Dendritic cell treated with granulocyte-macrophage colony-stimulating factor and Interleukin-4, amounts not matched to agents 40 ng/mL and 50 ng/mL, for 4 days (primary cell): ENCODE measurements at regions of chr2 and their contacts with region 1.

Region 1: DNA sequence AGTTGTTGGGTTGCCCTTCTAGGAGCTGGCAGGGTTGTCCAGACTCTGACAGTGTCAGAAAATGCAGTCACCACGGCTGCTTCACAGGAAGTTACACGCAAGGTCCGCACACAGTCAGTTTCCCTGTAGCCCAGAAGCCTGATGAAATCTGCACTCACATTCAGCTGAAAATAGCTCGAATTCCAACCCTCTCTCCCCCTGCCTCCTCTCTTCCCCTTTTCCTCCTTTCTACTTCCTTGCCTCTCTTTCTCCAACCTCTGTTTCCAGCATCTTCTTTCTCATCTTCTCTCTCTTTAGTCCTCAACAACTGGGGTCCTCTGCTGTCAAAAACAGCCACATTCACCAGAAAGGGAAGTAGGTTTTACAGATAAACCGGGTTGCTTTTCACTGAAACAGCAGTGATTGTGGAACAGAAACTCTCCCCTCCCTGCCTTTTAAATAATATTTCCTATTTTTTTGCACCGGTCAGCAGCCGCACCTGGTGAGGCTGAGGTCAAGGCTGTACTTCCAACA is 69.3 kb downstream of the BCL11A start:
- H3K4me3 Mint-ChIP-seq: peak overlapping the region; percentile 69
- H3K27ac Mint-ChIP-seq: peak overlapping the region; percentile 89
- H3K4me1 Mint-ChIP-seq: peaks cover 75% of the 10 kb centered on the region
- H3K27me3 Mint-ChIP-seq: no peaks in the 10 kb centered on the region

Region 2: DNA sequence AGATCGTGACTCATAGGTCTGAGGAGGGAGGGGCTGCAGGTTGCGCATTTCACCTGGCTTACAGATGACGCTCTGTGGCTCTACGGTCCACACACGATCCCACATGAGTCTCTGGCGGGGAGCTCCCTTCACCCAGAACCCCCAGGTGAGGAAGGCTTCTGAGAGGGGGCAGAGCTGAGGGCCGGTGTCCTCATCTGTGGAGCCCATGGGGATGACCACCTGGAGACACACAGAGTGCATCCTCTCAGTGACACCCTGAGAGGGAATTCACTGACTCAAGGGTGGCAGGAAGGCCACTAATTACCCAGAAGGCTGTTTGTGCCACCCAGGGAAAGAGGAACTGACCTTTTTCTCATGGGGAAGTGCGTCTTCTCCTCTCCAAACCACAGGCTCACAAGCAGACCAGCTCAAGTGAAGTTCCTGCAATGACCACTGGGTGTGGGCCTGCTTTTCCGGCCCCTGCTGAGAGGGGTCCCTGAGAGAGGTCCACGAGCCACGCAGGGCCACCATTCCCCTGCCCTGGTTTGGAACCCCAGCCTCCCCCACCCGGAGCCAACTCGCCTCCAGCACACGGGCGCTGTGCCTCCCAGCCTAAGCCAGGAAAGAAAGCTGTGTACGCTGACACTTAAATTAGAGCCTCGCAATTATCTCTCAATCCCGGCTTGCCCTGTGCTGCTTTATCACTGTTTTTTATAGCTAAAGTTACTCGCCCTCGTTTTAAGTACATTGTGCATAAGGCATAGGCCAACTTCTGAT is 44.8 kb before region 1 on chr2:
- intact Hi-C with region 1: loop called (anchors 10 kb)
- H3K4me3 Mint-ChIP-seq: peak overlapping the region; percentile 65
- H3K27ac Mint-ChIP-seq: peak overlapping the region; percentile 88
- H3K4me1 Mint-ChIP-seq: peaks cover 61% of the 10 kb centered on the region
- H3K27me3 Mint-ChIP-seq: no peaks in the 10 kb centered on the region